ENCODE measurements at regions of chr20 and their contacts with region 1.

Region 1: GRCh38 chr20:51326201-51326819 is 216.2 kb downstream of the NFATC2 start:
- DNase-seq: no peak
- ATAC-seq: peak in 1 of 8 donors; percentile 44
- H3K4me3 ChIP-seq: no peak overlapping the region
- H3K27ac ChIP-seq: no peak overlapping the region
- H3K4me1 ChIP-seq: no peaks in the 10 kb centered on the region
- H3K27me3 ChIP-seq: peaks cover 0 to 26% (median 6%) of the 10 kb centered on the region in 7 donors
- CTCF ChIP-seq: peak in 8 of 9 donors; percentile 21 to 80 (median 48)

Region 2: GRCh38 chr20:50992733-50993457 is 333.4 kb before region 1 on chr20:
- intact Hi-C with region 1: loop called in 2 of 10 experiments (anchors 5 kb)
- DNase-seq: no peak
- ATAC-seq: peak in 3 of 8 donors; percentile 33 to 66 (median 33)
- H3K4me3 ChIP-seq: no peak overlapping the region
- H3K27ac ChIP-seq: no peak overlapping the region
- H3K4me1 ChIP-seq: no peaks in the 10 kb centered on the region
- H3K27me3 ChIP-seq: peaks cover 0 to 49% (median 31%) of the 10 kb centered on the region in 7 donors
- CTCF ChIP-seq: peak in 7 of 9 donors; percentile 38 to 59 (median 50)

Region 3: DNA sequence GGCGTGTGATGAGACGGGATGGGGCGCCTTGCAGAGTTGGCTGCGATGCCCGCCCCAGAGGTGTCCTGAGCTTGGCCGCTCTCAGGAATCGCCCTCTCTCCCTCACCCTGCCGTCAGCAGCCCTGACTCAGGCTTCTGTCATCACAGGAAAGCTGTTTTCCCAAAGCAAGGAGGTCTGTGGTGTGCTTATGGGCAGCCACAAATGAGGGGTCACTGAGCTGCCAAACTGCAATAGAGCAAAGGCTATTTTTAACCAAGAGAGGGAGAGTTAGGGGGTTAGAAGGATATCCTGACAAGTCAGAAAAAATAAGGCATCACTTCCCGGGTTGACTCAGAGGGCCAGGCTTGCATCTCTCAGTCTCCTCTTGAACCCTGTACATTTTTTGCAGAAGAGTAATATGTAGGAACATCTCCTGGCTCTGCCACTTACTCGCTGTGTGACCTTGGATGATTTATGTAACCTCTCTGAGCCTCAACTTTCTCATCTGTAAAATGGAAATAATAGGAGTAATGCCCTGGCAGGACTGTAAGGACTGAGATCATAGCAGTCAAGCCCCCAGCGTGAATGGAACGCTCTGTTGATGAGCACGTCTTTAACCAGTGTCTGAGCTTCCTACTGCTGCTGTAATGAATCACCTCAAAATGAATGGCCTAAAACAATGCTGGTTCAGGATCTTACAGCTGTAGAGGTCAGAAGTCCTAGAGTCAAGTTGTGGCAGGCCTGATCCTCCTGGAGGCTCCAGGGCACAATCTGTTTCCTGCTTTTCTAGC is 34.3 kb after region 1 on chr20:
- intact Hi-C with region 1: no loop called
- DNase-seq: no peak
- ATAC-seq: peak in 2 of 8 donors; percentile 30 to 38
- H3K4me3 ChIP-seq: no peak overlapping the region
- H3K27ac ChIP-seq: peak overlapping the region in 1 of 10 donors; percentile 47
- H3K4me1 ChIP-seq: peaks cover 0 to 10% (median 0%) of the 10 kb centered on the region in 9 donors
- H3K27me3 ChIP-seq: peaks cover 0 to 8% (median 0%) of the 10 kb centered on the region in 7 donors
- CTCF ChIP-seq: no peak